PC-3 (cell line): ENCODE measurements at regions of chr2 and their contacts with region 1.

Region 1: DNA sequence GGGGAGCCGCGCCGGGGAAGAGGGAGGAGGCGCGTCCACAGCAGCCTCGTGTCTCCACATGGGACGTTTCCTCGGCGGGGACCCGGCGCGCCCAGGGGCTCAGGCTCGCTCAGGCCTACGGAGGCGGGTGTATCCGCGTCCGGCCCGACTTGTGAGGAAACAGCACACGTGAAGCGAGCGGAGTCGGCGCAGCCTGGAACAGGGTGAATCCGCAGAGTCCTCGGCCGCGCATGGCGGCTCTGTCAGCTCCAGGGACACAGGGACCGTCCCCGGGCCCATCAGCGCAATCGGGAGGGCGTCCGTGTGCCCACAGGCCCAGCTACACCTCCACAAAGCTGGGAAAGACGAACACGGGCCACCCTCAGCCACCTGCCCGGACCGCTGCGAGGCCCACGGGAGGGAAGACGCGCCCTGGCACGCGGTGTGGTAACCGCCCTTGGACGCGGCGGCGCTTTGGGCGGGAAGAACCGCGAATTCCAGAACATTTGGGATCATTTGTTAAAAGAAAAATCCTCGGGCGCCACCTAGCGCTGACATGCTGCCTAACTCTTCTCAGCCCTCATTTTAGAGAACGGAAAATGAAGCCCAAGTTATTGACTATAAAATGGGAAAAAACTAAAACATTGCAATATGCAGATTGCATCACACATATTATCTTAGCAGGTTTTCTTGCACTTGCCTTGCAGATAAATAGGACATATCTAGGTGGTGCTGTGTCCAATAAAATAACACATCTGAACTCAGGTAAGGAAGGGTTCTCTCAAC is 40.4 kb downstream of the TMEM18 start:
- DNase-seq: peak; percentile 84
- ATAC-seq: peak; percentile 37
- H3K4me3 ChIP-seq: no peak overlapping the region
- H3K27ac ChIP-seq: peak overlapping the region; percentile 70
- H3K4me1 ChIP-seq: peaks cover 24% of the 10 kb centered on the region
- H3K27me3 ChIP-seq: no peaks in the 10 kb centered on the region
- CTCF ChIP-seq: peak; percentile 90

Region 2: DNA sequence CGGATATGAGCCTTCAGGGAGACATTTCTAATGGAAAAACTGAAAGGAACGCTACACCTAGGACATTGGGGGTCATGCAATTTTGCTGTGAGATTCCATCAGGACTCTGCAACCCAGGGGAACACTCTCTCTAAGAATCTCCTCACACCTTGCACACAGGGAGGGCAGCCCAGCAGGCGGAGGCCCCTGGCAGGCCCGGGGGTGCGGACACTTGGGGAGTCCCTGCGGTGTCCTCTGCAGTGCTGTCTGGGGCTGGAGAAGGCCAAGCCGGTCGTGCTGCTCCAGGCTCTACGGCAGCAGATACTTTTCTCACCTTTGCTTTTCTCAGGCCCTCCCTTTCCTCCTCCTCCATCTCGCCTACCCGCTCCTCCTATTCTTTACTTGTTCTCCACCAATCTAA is 535.8 kb before region 1 on chr2:
- CTCF ChIA-PET with region 1: no interaction called
- POLR2A ChIA-PET with region 1: no interaction called
- intact Hi-C with region 1: no loop called
- DNase-seq: no peak
- ATAC-seq: no peak
- H3K4me3 ChIP-seq: no peak overlapping the region
- H3K27ac ChIP-seq: no peak overlapping the region
- H3K4me1 ChIP-seq: no peaks in the 10 kb centered on the region
- H3K27me3 ChIP-seq: no peaks in the 10 kb centered on the region
- CTCF ChIP-seq: no peak

Region 3: GRCh38 chr2:529425-529824 is 107.4 kb before region 1 on chr2:
- CTCF ChIA-PET with region 1: interaction called, 4 read pairs
- POLR2A ChIA-PET with region 1: no interaction called
- intact Hi-C with region 1: loop called (anchors 1 kb)
- DNase-seq: peak; percentile 77
- ATAC-seq: peak; percentile 60
- H3K4me3 ChIP-seq: no peak overlapping the region
- H3K27ac ChIP-seq: no peak overlapping the region
- H3K4me1 ChIP-seq: 0 out of 2 replicates have a peak, but pooled peaks cover 3% of the 10 kb centered on the region
- H3K27me3 ChIP-seq: no peaks in the 10 kb centered on the region
- CTCF ChIP-seq: peak; percentile 67

Region 4: DNA sequence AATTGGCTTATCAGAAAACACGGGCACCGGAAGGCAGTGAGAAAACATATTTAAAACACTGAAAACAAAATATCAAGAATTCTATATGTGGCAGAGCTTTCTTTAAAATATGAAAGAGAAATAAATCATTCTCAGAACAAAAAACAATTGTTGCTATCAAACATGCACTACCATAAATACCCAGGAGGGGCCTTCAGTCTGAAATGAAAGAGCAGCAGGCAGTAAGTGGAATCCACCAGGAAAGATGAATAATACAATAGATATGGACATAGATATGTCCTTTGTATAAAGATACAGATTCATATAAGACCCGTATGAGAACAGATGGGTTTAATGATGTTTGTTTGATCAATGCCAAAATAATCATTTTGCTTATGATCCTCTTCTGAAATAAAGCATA is 101.6 kb before region 1 on chr2:
- CTCF ChIA-PET with region 1: no interaction called
- POLR2A ChIA-PET with region 1: no interaction called
- intact Hi-C with region 1: loop called (anchors 1 kb)
- DNase-seq: peak; percentile 65
- ATAC-seq: peak; percentile 64; the same call in 1 of the 2 replicates
- H3K4me3 ChIP-seq: no peak overlapping the region
- H3K27ac ChIP-seq: no peak overlapping the region
- H3K4me1 ChIP-seq: no peaks in the 10 kb centered on the region
- H3K27me3 ChIP-seq: no peaks in the 10 kb centered on the region
- CTCF ChIP-seq: peak; percentile 71

Region 5: DNA sequence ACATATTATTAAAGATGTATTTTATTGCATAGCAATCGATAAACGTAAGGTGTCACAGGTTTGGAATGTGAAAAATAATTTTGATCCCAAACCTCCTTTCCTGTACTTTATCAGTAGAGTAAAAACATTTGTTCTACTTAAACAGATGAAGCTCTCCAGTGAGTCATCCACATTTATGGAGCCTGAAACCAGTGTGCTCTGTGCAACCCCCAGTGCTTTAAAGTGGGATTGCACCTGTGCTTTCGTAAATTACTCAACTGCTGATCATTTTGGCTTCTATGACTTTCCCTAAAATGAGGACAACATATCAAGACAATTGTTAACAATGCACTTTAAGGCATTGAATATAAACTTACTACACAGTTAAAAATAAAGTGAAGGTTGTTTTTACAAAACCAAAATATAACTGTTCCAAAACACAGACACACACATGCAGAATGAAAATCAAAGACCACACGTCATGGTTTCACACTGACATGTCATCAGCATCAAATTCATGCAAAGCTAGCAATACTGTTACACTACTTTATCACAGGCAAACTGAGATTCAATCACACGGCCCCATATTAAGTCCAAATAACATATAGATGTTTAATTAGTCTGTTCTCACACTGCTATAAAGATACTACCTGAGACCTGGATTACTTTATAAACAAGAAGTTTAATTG is 30.6 kb after region 1 on chr2:
- CTCF ChIA-PET with region 1: no interaction called
- POLR2A ChIA-PET with region 1: no interaction called
- intact Hi-C with region 1: loop called (anchors 5 kb)
- DNase-seq: peak; percentile 86
- ATAC-seq: peak; percentile 87
- H3K4me3 ChIP-seq: no peak overlapping the region
- H3K27ac ChIP-seq: no peak overlapping the region
- H3K4me1 ChIP-seq: peaks cover 13% of the 10 kb centered on the region; the same call in 1 of the 2 replicates
- H3K27me3 ChIP-seq: no peaks in the 10 kb centered on the region
- CTCF ChIP-seq: peak; percentile 75